ENCODE measurements at regions of chr14 and their contacts with region 1.

Region 1: DNA sequence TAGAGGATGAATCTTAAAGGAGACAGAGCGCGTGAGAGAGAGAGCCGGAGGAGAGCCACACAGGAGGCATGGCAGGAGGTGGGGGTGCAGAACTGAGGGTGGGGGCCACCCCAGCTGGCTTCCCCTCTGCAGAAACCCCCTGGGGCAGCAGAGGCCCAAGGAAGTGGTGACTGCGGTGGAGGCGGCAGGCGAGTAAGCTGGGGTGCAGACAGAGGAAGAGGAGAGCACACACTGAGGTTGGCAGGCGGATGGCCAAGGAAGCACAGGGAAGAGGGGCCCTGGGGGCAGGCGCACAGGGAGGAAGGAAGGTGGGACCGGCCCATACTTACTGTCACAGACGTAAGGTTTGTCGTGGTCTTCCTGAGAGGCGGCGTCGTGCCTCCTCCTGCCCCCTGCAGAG is 179.8 kb downstream of the DPF3 start:
- DNase-seq: peak; percentile 44
- ATAC-seq: peak; percentile 90
- H3K4me3 Mint-ChIP-seq: peak overlapping the region; percentile 63
- H3K27ac Mint-ChIP-seq: peak overlapping the region; percentile 68
- H3K4me1 Mint-ChIP-seq: peaks cover 54% of the 10 kb centered on the region
- H3K27me3 Mint-ChIP-seq: no peaks in the 10 kb centered on the region
- CTCF ChIP-seq: no peak

Region 2: GRCh38 chr14:72788972-72789728 is 75.1 kb after region 1 on chr14:
- CTCF ChIA-PET with region 1: no interaction called
- POLR2A ChIA-PET with region 1: no interaction called
- intact Hi-C with region 1: loop called (anchors 5 kb)
- DNase-seq: no peak
- ATAC-seq: no peak
- H3K4me3 Mint-ChIP-seq: no peak overlapping the region
- H3K27ac Mint-ChIP-seq: peak overlapping the region; percentile 46
- H3K4me1 Mint-ChIP-seq: peaks cover 53% of the 10 kb centered on the region
- H3K27me3 Mint-ChIP-seq: no peaks in the 10 kb centered on the region
- CTCF ChIP-seq: no peak

Measured in activated B cell treated with CpG ODN at 0.5 μM for 24 hours (primary cell).